ENCODE measurements at regions of chr4 and their contacts with region 1.

Region 1: GRCh38 chr4:128191115-128191781 is 96.4 kb downstream of the PGRMC2 start:
- DNase-seq: peak; percentile 21 to 85 (median 69)
- ATAC-seq: peak; percentile 100
- H3K4me3 ChIP-seq: no peak overlapping the region
- H3K4me3 Mint-ChIP-seq: no peak overlapping the region
- H3K27ac ChIP-seq: no peak overlapping the region
- H3K27ac Mint-ChIP-seq: no peak overlapping the region
- H3K4me1 ChIP-seq: no peaks in the 10 kb centered on the region
- H3K4me1 Mint-ChIP-seq: peaks cover 3% of the 10 kb centered on the region
- H3K27me3 ChIP-seq: no peaks in the 10 kb centered on the region
- H3K27me3 Mint-ChIP-seq: no peaks in the 10 kb centered on the region
- CTCF ChIP-seq: peak; percentile 96

Region 2: GRCh38 chr4:128287871-128288688 is 96.8 kb after region 1 on chr4:
- CTCF ChIA-PET with region 1: interaction called, 4 read pairs
- POLR2A ChIA-PET with region 1: no interaction called
- intact Hi-C with region 1: loop called in 1 of 2 experiments (anchors 10 kb)
- DNase-seq: peak; percentile 99 to 100 (median 100)
- ATAC-seq: peak; percentile 79
- H3K4me3 ChIP-seq: peak overlapping the region; percentile 69 to 91
- H3K4me3 Mint-ChIP-seq: peak overlapping the region; percentile 97
- H3K27ac ChIP-seq: peak overlapping the region; percentile 95 to 98
- H3K27ac Mint-ChIP-seq: peak overlapping the region; percentile 97
- H3K4me1 ChIP-seq: peaks cover 28% of the 10 kb centered on the region
- H3K4me1 Mint-ChIP-seq: peaks cover 45% of the 10 kb centered on the region
- H3K27me3 ChIP-seq: no peaks in the 10 kb centered on the region
- H3K27me3 Mint-ChIP-seq: no peaks in the 10 kb centered on the region
- CTCF ChIP-seq: no peak

Region 3: GRCh38 chr4:128341634-128342033 is 150.4 kb after region 1 on chr4:
- CTCF ChIA-PET with region 1: interaction called, 3 read pairs
- POLR2A ChIA-PET with region 1: no interaction called
- intact Hi-C with region 1: loop called in 1 of 2 experiments (anchors 5 kb)
- DNase-seq: peak in 1 of 9 experiments; percentile 6
- ATAC-seq: no peak
- H3K4me3 ChIP-seq: no peak overlapping the region
- H3K4me3 Mint-ChIP-seq: no peak overlapping the region
- H3K27ac ChIP-seq: no peak overlapping the region
- H3K27ac Mint-ChIP-seq: no peak overlapping the region
- H3K4me1 ChIP-seq: no peaks in the 10 kb centered on the region
- H3K4me1 Mint-ChIP-seq: no peaks in the 10 kb centered on the region
- H3K27me3 ChIP-seq: no peaks in the 10 kb centered on the region
- H3K27me3 Mint-ChIP-seq: no peaks in the 10 kb centered on the region
- CTCF ChIP-seq: no peak

Region 4: DNA sequence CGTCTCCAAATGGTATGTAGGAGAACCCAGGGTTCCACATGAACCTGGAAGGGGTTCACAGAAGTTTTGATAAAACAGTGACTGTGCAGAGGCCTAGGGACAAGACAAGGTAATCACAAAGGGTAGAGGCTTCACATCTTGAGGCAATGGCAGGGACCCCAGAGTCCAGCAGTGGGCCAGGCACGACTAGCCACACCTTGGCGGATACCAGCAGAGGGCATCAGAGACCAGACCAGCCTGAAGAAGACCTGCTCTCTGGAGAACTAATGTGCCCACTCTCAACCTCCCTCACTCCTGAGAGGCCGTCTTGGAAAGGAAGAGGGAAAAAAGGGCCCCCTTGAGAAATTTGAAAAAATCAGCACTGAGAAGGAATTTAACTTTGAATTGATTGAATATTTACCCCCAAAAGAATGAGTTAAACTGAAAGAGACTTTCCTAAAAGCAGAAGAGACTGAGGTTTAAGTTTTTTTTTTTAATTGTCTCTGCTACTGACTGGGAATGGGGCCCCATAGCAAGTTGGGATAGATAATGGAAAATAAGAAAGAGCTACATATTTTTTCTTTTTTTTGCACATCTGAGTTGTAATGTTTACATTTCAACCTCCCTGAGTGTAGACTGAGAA is 374.4 kb after region 1 on chr4:
- CTCF ChIA-PET with region 1: interaction called, 3 read pairs
- POLR2A ChIA-PET with region 1: no interaction called
- intact Hi-C with region 1: loop called (anchors 10 kb)
- DNase-seq: peak in 3 of 9 experiments; percentile 4 to 26 (median 20)
- ATAC-seq: no peak
- H3K4me3 ChIP-seq: no peak overlapping the region
- H3K4me3 Mint-ChIP-seq: no peak overlapping the region
- H3K27ac ChIP-seq: no peak overlapping the region
- H3K27ac Mint-ChIP-seq: no peak overlapping the region
- H3K4me1 ChIP-seq: no peaks in the 10 kb centered on the region
- H3K4me1 Mint-ChIP-seq: no peaks in the 10 kb centered on the region
- H3K27me3 ChIP-seq: no peaks in the 10 kb centered on the region
- H3K27me3 Mint-ChIP-seq: peaks cover 14% of the 10 kb centered on the region
- CTCF ChIP-seq: no peak

Region 5: GRCh38 chr4:128863312-128864075 is 672.2 kb after region 1 on chr4:
- CTCF ChIA-PET with region 1: interaction called, 12 read pairs
- POLR2A ChIA-PET with region 1: no interaction called
- intact Hi-C with region 1: loop called (anchors 1 kb)
- DNase-seq: peak; percentile 24 to 80 (median 67)
- ATAC-seq: peak; percentile 26
- H3K4me3 ChIP-seq: no peak overlapping the region
- H3K4me3 Mint-ChIP-seq: no peak overlapping the region
- H3K27ac ChIP-seq: peak overlapping the region in 1 of 2 experiments; percentile 52
- H3K27ac Mint-ChIP-seq: peak overlapping the region; percentile 75
- H3K4me1 ChIP-seq: peaks cover 24% of the 10 kb centered on the region
- H3K4me1 Mint-ChIP-seq: peaks cover 35% of the 10 kb centered on the region
- H3K27me3 ChIP-seq: no peaks in the 10 kb centered on the region
- H3K27me3 Mint-ChIP-seq: no peaks in the 10 kb centered on the region
- CTCF ChIP-seq: peak; percentile 78

Measured in CD8-positive, alpha-beta T cell (primary cell).